Head of caudate nucleus (tissue), 42 donors: ENCODE measurements at regions of chr3 and their contacts with region 1.

Region 1: GRCh38 chr3:183635431-183636220 is at the start of gene KLHL24:
- DNase-seq: peak; percentile 93 to 99 (median 97)

Region 2: GRCh38 chr3:183697610-183698317 is 62.1 kb after region 1 on chr3 and contains the start of gene YEATS2:
- intact Hi-C with region 1: loop called (anchors 2 kb)
- DNase-seq: peak in 40 of 42 donors; percentile 18 to 85 (median 73)